K562 (cell line): ENCODE measurements at regions of chr17 and their contacts with region 1.

Region 1: GRCh38 chr17:55238179-55238930 is 26.4 kb upstream of the HLF start:
- DNase-seq: peak; percentile 93 to 99 (median 98)
- ATAC-seq: peak; percentile 99
- H3K4me3 ChIP-seq: peak overlapping the region; percentile 52
- H3K27ac ChIP-seq: peak overlapping the region; percentile 41; the same call in 2 of the 3 replicates
- H3K4me1 ChIP-seq: peaks cover 11 to 14% of the 10 kb centered on the region in 2 experiments; a peak in 4 of 5 replicates
- H3K27me3 ChIP-seq: no peaks in the 10 kb centered on the region
- CTCF ChIP-seq: no peak
- EP300 ChIP-seq: no peak
- POLR2A ChIP-seq: no peak; the same call in 1 of the 2 replicates
- RAD21 ChIP-seq: no peak

Region 2: GRCh38 chr17:55090079-55090492 is 148.3 kb before region 1 on chr17:
- CTCF ChIA-PET with region 1: no interaction called
- POLR2A ChIA-PET with region 1: no interaction called
- in situ Hi-C with region 1: no loop called
- intact Hi-C with region 1: no loop called
- DNase-seq: peak; percentile 32 to 78 (median 51)
- ATAC-seq: peak; percentile 84
- H3K4me3 ChIP-seq: no peak overlapping the region
- H3K27ac ChIP-seq: peak overlapping the region; percentile 13; the same call in 2 of the 3 replicates
- H3K4me1 ChIP-seq: peaks cover 0 to 21% of the 10 kb centered on the region in 2 experiments; a peak in 3 of 5 replicates
- H3K27me3 ChIP-seq: no peaks in the 10 kb centered on the region
- CTCF ChIP-seq: no peak
- EP300 ChIP-seq: no peak
- POLR2A ChIP-seq: no peak
- RAD21 ChIP-seq: no peak

Region 3: GRCh38 chr17:55264645-55265298 is 26.4 kb after region 1 on chr17 and contains the start of gene HLF:
- CTCF ChIA-PET with region 1: no interaction called
- POLR2A ChIA-PET with region 1: no interaction called
- in situ Hi-C with region 1: no loop called
- intact Hi-C with region 1: loop called (anchors 1 kb)
- DNase-seq: peak; percentile 88 to 94 (median 92)
- ATAC-seq: peak; percentile 99
- H3K4me3 ChIP-seq: peak within 1 kb of the TSS; percentile 27
- H3K27ac ChIP-seq: no peak within 1 kb of the TSS
- H3K4me1 ChIP-seq: peaks cover 0 to 24% of the 10 kb centered on the region in 2 experiments; a peak in 2 of 5 replicates
- H3K27me3 ChIP-seq: peaks cover 16 to 20% of the 10 kb centered on the region in 2 experiments
- CTCF ChIP-seq: 0 out of 6 replicates have a peak, but pooled peaks of 1 of the 3 experiments have one; percentile 2
- EP300 ChIP-seq: no peak
- POLR2A ChIP-seq: no peak
- RAD21 ChIP-seq: no peak
- polyA plus RNA-seq, gene HLF: 0.03 to 0.11 TPM

Region 4: GRCh38 chr17:55348749-55349354 is 110.5 kb after region 1 on chr17:
- CTCF ChIA-PET with region 1: no interaction called
- POLR2A ChIA-PET with region 1: no interaction called
- in situ Hi-C with region 1: no loop called
- intact Hi-C with region 1: loop called (anchors 10 kb)
- DNase-seq: peak; percentile 43 to 78 (median 55)
- ATAC-seq: peak; percentile 64
- H3K4me3 ChIP-seq: no peak overlapping the region
- H3K27ac ChIP-seq: no peak overlapping the region
- H3K4me1 ChIP-seq: peaks cover 10 to 25% of the 10 kb centered on the region in 2 experiments
- H3K27me3 ChIP-seq: no peaks in the 10 kb centered on the region
- CTCF ChIP-seq: peak; percentile 81 to 92 (median 83)
- EP300 ChIP-seq: no peak
- POLR2A ChIP-seq: no peak
- RAD21 ChIP-seq: peak; percentile 92 to 93